AG04449 (cell line): ENCODE measurements at regions of chr3 and their contacts with region 1.

Region 1: GRCh38 chr3:142279965-142280590 is 54.7 kb upstream of the GK5 start:
- DNase-seq: peak; percentile 21
- H3K4me3 ChIP-seq: no peak overlapping the region
- CTCF ChIP-seq: peak; percentile 51

Region 2: GRCh38 chr3:142120707-142121106 is 159.4 kb before region 1 on chr3:
- CTCF ChIA-PET with region 1: interaction called, 110 read pairs
- POLR2A ChIA-PET with region 1: interaction called, 3 read pairs
- DNase-seq: no peak
- H3K4me3 ChIP-seq: no peak overlapping the region
- CTCF ChIP-seq: no peak

Region 3: DNA sequence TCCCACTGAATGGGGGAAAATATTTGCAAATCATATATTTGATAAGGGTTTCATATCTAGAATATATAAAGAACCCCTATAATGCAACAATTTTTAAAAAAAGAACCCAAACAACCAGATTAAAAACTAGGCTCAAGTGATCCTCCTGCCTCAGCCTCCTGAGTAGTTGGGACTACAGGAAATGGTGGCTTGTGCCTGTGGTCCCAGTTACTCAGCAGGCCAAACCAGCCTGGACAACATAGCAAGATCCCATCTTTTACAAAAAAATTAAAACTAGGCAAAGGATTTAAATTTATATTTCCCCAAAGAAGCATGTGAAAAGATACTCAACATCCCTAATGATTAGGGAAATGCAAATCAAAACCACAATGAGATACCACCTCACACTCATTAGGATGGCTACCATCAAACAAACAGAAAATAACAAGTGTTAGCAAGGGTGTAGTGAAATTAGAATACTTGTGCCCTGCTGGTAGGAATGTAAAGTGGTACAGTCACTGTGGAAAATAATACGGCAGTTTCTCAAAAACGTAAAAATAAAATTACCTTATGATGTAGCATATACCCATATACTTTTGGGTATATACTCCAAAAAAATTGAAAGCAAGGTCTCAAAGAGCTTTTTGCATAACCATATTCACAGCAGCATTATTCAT is 150.4 kb before region 1 on chr3:
- CTCF ChIA-PET with region 1: interaction called, 110 read pairs
- POLR2A ChIA-PET with region 1: no interaction called
- DNase-seq: no peak
- H3K4me3 ChIP-seq: no peak overlapping the region
- CTCF ChIP-seq: no peak

Region 4: GRCh38 chr3:142180761-142181362 is 99.2 kb before region 1 on chr3:
- CTCF ChIA-PET with region 1: interaction called, 98 read pairs
- POLR2A ChIA-PET with region 1: no interaction called
- DNase-seq: no peak
- H3K4me3 ChIP-seq: no peak overlapping the region
- CTCF ChIP-seq: peak; percentile 56

Region 5: GRCh38 chr3:142676151-142676550 is 396.1 kb after region 1 on chr3:
- CTCF ChIA-PET with region 1: no interaction called
- POLR2A ChIA-PET with region 1: no interaction called
- DNase-seq: no peak
- H3K4me3 ChIP-seq: no peak overlapping the region
- CTCF ChIP-seq: no peak